ENCODE measurements at regions of chr2 and their contacts with region 1.

Region 1: GRCh38 chr2:158753641-158754611 is 41.2 kb upstream of the DAPL1 start:
- DNase-seq: peak in 4 of 5 donors; percentile 31 to 43 (median 36)
- H3K4me3 ChIP-seq: no peak overlapping the region
- H3K4me3 Mint-ChIP-seq: no peak overlapping the region
- H3K27ac ChIP-seq: no peak overlapping the region
- H3K27ac Mint-ChIP-seq: no peak overlapping the region
- H3K4me1 ChIP-seq: no peaks in the 10 kb centered on the region
- H3K4me1 Mint-ChIP-seq: no peaks in the 10 kb centered on the region
- H3K27me3 ChIP-seq: no peaks in the 10 kb centered on the region
- H3K27me3 Mint-ChIP-seq: peaks cover 16 to 24% of the 10 kb centered on the region in 2 donors

Region 2: GRCh38 chr2:158024288-158024898 is 729.5 kb before region 1 on chr2:
- CTCF ChIA-PET with region 1: interaction called, 311 read pairs
- POLR2A ChIA-PET with region 1: no interaction called
- intact Hi-C with region 1: loop called (anchors 1 kb)
- DNase-seq: peak in 4 of 5 donors; percentile 28 to 45 (median 37)
- H3K4me3 ChIP-seq: no peak overlapping the region
- H3K4me3 Mint-ChIP-seq: no peak overlapping the region
- H3K27ac ChIP-seq: no peak overlapping the region
- H3K27ac Mint-ChIP-seq: no peak overlapping the region
- H3K4me1 ChIP-seq: peaks cover 10% of the 10 kb centered on the region
- H3K4me1 Mint-ChIP-seq: peaks cover 4 to 10% (median 7%) of the 10 kb centered on the region in 4 donors
- H3K27me3 ChIP-seq: no peaks in the 10 kb centered on the region
- H3K27me3 Mint-ChIP-seq: peaks cover 0 to 2% of the 10 kb centered on the region in 2 donors

Region 3: DNA sequence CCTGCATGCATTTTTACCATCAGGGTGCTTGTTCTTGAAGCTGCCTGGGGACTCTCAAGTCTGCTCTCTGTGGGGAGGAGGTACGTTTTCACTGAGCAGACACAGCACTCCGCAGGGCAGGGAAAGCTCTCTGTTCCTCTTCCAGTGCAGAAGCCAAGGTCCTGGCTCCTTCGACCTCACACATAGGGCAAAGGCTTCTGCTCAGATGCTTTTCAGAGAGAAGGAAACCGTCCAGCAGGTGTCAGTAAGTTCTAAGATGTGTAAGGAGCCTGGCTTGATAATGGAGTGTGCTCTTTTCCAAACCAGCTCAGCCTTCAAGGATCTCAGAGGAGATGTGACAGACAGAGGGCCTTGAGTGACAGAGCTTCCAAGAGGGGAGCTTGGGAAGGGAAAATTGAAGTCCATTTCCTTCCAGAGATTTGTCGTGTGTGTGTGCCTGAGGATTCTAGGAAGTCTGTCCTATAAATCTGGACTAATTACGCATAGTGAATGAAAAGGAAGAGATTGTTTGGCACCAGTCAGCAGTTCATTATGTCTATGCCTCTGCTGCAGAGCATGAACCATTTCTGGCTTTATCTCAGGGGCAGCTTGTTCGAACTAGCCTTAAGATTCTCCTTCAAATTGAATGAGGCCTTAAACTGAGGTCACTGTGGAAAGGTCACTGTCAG is 719.6 kb before region 1 on chr2:
- CTCF ChIA-PET with region 1: interaction called, 311 read pairs
- POLR2A ChIA-PET with region 1: interaction called, 3 read pairs
- intact Hi-C with region 1: no loop called
- DNase-seq: peak in 3 of 5 donors; percentile 5 to 10 (median 9)
- H3K4me3 ChIP-seq: no peak overlapping the region
- H3K4me3 Mint-ChIP-seq: no peak overlapping the region
- H3K27ac ChIP-seq: no peak overlapping the region
- H3K27ac Mint-ChIP-seq: no peak overlapping the region
- H3K4me1 ChIP-seq: no peaks in the 10 kb centered on the region
- H3K4me1 Mint-ChIP-seq: no peaks in the 10 kb centered on the region
- H3K27me3 ChIP-seq: peaks cover 3% of the 10 kb centered on the region
- H3K27me3 Mint-ChIP-seq: peaks cover 11 to 21% of the 10 kb centered on the region in 2 donors

Region 4: GRCh38 chr2:158179660-158180059 is 574.3 kb before region 1 on chr2:
- CTCF ChIA-PET with region 1: interaction called, 3 read pairs
- POLR2A ChIA-PET with region 1: no interaction called
- intact Hi-C with region 1: loop called (anchors 1 kb)
- DNase-seq: no peak
- H3K4me3 ChIP-seq: no peak overlapping the region
- H3K4me3 Mint-ChIP-seq: no peak overlapping the region
- H3K27ac ChIP-seq: no peak overlapping the region
- H3K27ac Mint-ChIP-seq: no peak overlapping the region
- H3K4me1 ChIP-seq: no peaks in the 10 kb centered on the region
- H3K4me1 Mint-ChIP-seq: no peaks in the 10 kb centered on the region
- H3K27me3 ChIP-seq: no peaks in the 10 kb centered on the region
- H3K27me3 Mint-ChIP-seq: peaks cover 5 to 9% of the 10 kb centered on the region in 2 donors

Region 5: DNA sequence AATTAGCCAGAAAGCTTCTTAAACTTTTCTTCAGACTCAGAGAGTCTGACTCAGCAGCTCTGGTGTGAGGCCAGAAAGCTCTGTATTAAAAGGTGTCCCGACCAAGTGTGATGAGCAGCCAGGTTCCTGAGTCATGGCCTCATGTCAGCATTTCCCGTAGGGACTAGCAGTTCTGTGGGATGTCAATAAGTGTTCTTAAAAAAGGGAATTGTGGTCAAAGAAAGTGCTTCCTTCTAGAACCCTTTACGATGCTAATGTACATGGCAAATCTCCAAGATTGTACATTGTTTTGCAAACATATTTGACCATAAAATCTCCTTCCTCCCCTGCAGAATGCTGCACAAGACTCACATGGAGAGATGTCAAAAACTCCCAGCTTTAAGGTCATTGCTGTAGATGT is 1228.3 kb after region 1 on chr2:
- CTCF ChIA-PET with region 1: no interaction called
- POLR2A ChIA-PET with region 1: no interaction called
- intact Hi-C with region 1: no loop called
- DNase-seq: no peak
- H3K4me3 ChIP-seq: no peak overlapping the region
- H3K4me3 Mint-ChIP-seq: no peak overlapping the region
- H3K27ac ChIP-seq: no peak overlapping the region
- H3K27ac Mint-ChIP-seq: no peak overlapping the region
- H3K4me1 ChIP-seq: no peaks in the 10 kb centered on the region
- H3K4me1 Mint-ChIP-seq: no peaks in the 10 kb centered on the region
- H3K27me3 ChIP-seq: no peaks in the 10 kb centered on the region
- H3K27me3 Mint-ChIP-seq: peaks cover 12 to 29% of the 10 kb centered on the region in 2 donors

Measured in CD4-positive, alpha-beta memory T cell (primary cell).